Breast epithelium (tissue), 4 donors: ENCODE measurements at regions of chr1 and their contacts with region 1.

Region 1: DNA sequence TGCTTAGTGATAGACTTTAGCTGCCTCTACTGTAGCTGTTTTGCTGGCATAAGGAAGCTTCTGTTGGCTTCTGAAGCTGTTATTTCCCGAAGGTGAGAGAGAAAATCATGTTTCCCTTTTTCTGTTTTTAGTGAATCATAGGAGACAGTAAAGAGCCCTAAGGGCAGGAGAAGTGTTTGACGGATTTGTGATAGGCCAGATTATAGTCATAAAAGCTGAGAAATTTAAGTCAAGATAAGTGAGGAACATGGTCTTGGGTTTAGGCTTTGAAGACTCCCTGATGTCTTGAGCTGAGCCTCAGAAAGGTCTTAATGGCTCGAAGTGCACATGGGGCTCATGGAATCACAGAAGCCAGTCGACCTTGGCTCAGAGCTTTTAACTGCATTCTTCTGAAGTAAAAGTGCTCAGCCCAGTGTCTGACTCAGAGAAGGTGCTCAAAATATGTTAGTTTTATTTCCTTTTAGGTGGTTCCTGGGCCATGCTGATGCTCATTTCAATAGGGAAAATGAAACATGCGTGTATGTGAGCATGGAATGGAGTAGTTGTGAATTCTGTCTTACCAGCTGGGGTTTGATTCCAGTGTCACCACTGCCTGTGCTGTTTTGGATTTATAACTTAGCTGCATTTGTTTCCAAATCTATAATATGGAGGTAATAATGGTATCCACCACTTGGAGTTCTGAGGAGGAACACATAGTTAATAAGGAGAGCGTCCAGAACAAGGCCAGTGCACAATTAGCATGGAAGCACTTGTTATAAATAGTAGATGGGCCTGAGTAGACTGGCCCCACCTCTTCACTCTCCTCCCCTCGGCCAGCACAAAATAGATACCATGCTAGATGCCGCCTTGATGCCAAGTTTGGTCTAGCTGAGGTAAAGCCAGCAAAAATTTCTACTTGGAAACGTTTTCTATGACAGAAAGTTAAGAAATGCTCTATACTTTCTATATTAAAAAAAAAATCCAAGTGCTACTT is 99.2 kb downstream of the C1orf21 start:
- DNase-seq: no peak
- H3K4me3 ChIP-seq: no peak overlapping the region
- H3K27ac ChIP-seq: peak overlapping the region; percentile 77 to 80
- H3K4me1 ChIP-seq: peaks cover 3 to 15% of the 10 kb centered on the region in 2 donors
- H3K27me3 ChIP-seq: no peaks in the 10 kb centered on the region
- CTCF ChIP-seq: no peak
- POLR2A ChIP-seq: no peak

Region 2: DNA sequence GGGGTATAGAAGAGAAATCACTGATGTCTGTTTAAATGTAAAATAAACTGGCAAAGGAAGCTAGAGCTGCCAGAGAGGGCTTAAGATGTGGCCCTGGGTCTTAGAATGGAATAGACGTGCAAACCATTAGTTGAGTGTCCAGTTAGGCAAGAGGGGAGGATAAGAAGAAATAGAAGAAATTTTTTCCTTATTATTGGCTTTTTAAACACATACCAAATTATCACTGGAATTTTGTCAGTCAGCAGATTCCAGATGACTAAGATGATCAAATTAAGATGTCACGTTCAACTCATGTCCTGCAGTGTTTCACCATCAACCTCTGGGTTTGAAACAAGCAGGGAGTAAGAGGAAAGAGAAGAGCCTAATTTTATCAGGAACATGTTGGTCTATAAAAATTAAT is 170.8 kb before region 1 on chr1:
- intact Hi-C with region 1: loop called (anchors 5 kb)
- DNase-seq: no peak
- H3K4me3 ChIP-seq: no peak overlapping the region
- H3K27ac ChIP-seq: peak overlapping the region in 1 of 2 donors; percentile 23
- H3K4me1 ChIP-seq: no peaks in the 10 kb centered on the region
- H3K27me3 ChIP-seq: no peaks in the 10 kb centered on the region
- CTCF ChIP-seq: no peak
- POLR2A ChIP-seq: no peak